Dendritic cell treated with granulocyte-macrophage colony-stimulating factor and Interleukin-4, amounts not matched to agents 40 ng/mL and 50 ng/mL, for 4 days (primary cell): ENCODE measurements at regions of chr6 and their contacts with region 1.

Region 1: DNA sequence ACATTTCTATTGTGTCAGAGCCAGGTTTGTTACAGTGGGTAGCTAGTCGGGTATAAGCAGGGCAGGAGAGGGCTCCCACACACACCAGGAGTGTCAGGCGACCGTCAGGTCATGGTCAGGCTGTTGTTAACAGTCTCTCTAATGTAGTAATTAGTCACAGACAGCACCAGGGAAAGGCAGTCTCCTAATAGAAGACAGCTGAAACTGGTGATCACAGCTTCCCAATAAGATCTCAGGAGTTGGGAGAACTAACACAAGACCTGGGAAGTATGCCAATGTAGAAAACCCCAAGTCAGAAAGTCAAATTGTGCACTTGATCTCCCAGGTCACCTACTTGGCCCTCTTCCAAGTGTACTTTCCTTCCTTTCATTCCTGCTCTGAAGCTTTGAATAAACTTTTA is 53.0 kb upstream of the GPR6 start:
- H3K4me3 Mint-ChIP-seq: no peak overlapping the region
- H3K27ac Mint-ChIP-seq: no peak overlapping the region
- H3K4me1 Mint-ChIP-seq: no peaks in the 10 kb centered on the region
- H3K27me3 Mint-ChIP-seq: peaks cover 1% of the 10 kb centered on the region

Region 2: GRCh38 chr6:109867009-109867969 is 57.8 kb before region 1 on chr6:
- intact Hi-C with region 1: loop called (anchors 10 kb)
- H3K4me3 Mint-ChIP-seq: no peak overlapping the region
- H3K27ac Mint-ChIP-seq: no peak overlapping the region
- H3K4me1 Mint-ChIP-seq: peaks cover 6% of the 10 kb centered on the region
- H3K27me3 Mint-ChIP-seq: no peaks in the 10 kb centered on the region